Activated naive CD4-positive, alpha-beta T cell treated with anti-CD3 and anti-CD28 coated beads for 36 hours (primary cell): ENCODE measurements at regions of chr15 and their contacts with region 1.

Region 1: DNA sequence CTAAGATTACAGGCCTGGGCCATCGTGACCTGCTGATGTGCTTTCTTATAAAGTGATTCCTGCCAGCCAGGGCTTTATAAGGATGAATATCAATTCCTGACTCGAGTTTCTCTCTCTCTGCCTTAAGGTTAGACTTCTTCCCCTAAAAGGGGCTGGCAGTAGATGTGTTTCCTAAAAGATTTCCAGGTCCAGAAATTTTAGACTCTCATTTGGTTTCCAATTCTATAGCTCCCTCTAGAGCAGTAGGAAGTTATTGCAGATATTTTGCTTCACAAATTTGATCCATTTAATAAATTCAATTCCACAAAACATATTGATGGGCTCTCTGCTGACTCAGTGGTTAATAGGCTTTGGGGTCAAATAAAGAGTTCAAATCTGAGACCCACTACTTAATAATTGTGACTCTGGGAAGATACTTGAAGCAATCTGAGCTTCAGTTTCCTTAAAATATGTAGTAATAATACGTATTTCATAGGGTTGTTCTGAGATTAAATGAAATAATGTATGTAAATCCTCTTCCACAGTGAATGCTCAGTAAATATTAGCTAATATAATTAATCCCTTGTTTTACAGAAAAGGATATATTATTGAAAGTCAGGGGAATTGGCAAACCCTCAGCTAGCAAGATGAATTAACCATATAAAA is 2.1 kb downstream of the TRIM69 start:
- DNase-seq: no peak
- H3K4me3 Mint-ChIP-seq: peak overlapping the region; percentile 12
- H3K27ac Mint-ChIP-seq: peak overlapping the region; percentile 78
- H3K4me1 Mint-ChIP-seq: peaks cover 51% of the 10 kb centered on the region
- H3K27me3 Mint-ChIP-seq: no peaks in the 10 kb centered on the region

Region 2: GRCh38 chr15:44593042-44593736 is 145.3 kb before region 1 on chr15:
- CTCF ChIA-PET with region 1: interaction called, 55 read pairs
- intact Hi-C with region 1: loop called (anchors 1 kb)
- DNase-seq: peak; percentile 31
- H3K4me3 Mint-ChIP-seq: no peak overlapping the region
- H3K27ac Mint-ChIP-seq: no peak overlapping the region
- H3K4me1 Mint-ChIP-seq: peaks cover 22% of the 10 kb centered on the region
- H3K27me3 Mint-ChIP-seq: no peaks in the 10 kb centered on the region

Region 3: GRCh38 chr15:44620081-44620480 is 118.4 kb before region 1 on chr15:
- CTCF ChIA-PET with region 1: interaction called, 10 read pairs
- intact Hi-C with region 1: no loop called
- DNase-seq: no peak
- H3K4me3 Mint-ChIP-seq: no peak overlapping the region
- H3K27ac Mint-ChIP-seq: no peak overlapping the region
- H3K4me1 Mint-ChIP-seq: peaks cover 9% of the 10 kb centered on the region
- H3K27me3 Mint-ChIP-seq: no peaks in the 10 kb centered on the region

Region 4: GRCh38 chr15:44682211-44682610 is 56.3 kb before region 1 on chr15:
- CTCF ChIA-PET with region 1: interaction called, 15 read pairs
- intact Hi-C with region 1: no loop called
- DNase-seq: no peak
- H3K4me3 Mint-ChIP-seq: peak overlapping the region; percentile 37
- H3K27ac Mint-ChIP-seq: peak overlapping the region; percentile 87
- H3K4me1 Mint-ChIP-seq: peaks cover 80% of the 10 kb centered on the region
- H3K27me3 Mint-ChIP-seq: no peaks in the 10 kb centered on the region

Region 5: DNA sequence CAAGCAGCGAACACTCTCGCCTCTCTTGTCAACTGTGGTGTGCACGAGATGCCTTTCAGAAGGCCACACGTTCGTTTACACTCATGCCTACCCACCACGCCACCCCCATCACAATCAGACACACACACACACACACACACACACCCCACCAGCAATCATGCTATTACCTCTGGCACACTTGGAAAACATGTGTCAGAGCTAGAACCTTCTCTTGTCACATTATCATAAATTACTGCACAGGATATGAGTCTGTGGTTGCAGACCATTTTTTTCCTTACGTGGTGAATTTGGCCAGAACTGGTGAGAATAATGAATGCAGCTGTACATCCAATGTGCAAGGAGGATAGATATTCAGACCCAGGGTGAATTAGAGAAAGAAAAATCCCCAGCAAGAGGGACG is 50.3 kb after region 1 on chr15:
- CTCF ChIA-PET with region 1: interaction called, 12 read pairs
- intact Hi-C with region 1: no loop called
- DNase-seq: peak; percentile 73
- H3K4me3 Mint-ChIP-seq: no peak overlapping the region
- H3K27ac Mint-ChIP-seq: peak overlapping the region; percentile 81
- H3K4me1 Mint-ChIP-seq: peaks cover 41% of the 10 kb centered on the region
- H3K27me3 Mint-ChIP-seq: no peaks in the 10 kb centered on the region